Heart left ventricle (tissue), 16 donors: ENCODE measurements at regions of chr17 and their contacts with region 1.

Region 1: GRCh38 chr17:65660947-65661346 is 99.5 kb upstream of the AXIN2 start:
- DNase-seq: no peak
- ATAC-seq: no peak
- H3K4me3 ChIP-seq: no peak overlapping the region
- H3K27ac ChIP-seq: no peak overlapping the region
- H3K4me1 ChIP-seq: no peaks in the 10 kb centered on the region
- H3K27me3 ChIP-seq: no peaks in the 10 kb centered on the region
- CTCF ChIP-seq: no peak
- POLR2A ChIP-seq: no peak

Region 2: GRCh38 chr17:65514082-65514481 is 146.9 kb before region 1 on chr17:
- intact Hi-C with region 1: no loop called
- DNase-seq: no peak
- ATAC-seq: peak in 1 of 4 donors; percentile 53
- H3K4me3 ChIP-seq: no peak overlapping the region
- H3K27ac ChIP-seq: no peak overlapping the region
- H3K4me1 ChIP-seq: peaks cover 0 to 5% (median 0%) of the 10 kb centered on the region in 12 donors
- H3K27me3 ChIP-seq: no peaks in the 10 kb centered on the region
- CTCF ChIP-seq: no peak
- POLR2A ChIP-seq: no peak

Region 3: DNA sequence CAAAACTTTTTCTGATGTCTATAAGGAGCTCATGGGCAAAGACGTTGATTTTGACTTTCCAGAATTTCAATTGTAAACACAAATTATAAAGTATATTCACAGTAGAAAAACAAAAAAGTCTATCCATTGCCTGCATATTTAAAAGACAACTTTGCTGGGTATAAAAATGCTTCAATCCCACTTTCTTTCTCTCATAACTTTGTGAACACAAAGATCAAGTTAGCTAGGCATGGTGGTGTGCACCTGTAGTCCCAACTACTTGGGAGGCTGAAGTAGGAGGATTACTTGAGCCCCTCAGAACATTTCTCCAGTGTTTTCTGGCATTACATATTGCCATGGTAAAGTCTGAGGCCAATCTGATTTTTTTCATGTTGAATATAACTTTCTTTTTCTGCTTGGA is 16.4 kb before region 1 on chr17:
- intact Hi-C with region 1: loop called in 1 of 10 experiments (anchors 1 kb)
- DNase-seq: no peak
- ATAC-seq: no peak
- H3K4me3 ChIP-seq: no peak overlapping the region
- H3K27ac ChIP-seq: no peak overlapping the region
- H3K4me1 ChIP-seq: no peaks in the 10 kb centered on the region
- H3K27me3 ChIP-seq: no peaks in the 10 kb centered on the region
- CTCF ChIP-seq: no peak
- POLR2A ChIP-seq: no peak